AG04450 (cell line): ENCODE measurements at regions of chr4 and their contacts with region 1.

Region 1: GRCh38 chr4:183987987-183988392 is 82.9 kb downstream of the STOX2 start:
- DNase-seq: peak; percentile 66
- H3K4me3 ChIP-seq: peak overlapping the region; percentile 57
- H3K27ac ChIP-seq: peak overlapping the region; percentile 84
- H3K27me3 ChIP-seq: peaks cover 4% of the 10 kb centered on the region
- CTCF ChIP-seq: no peak

Region 2: GRCh38 chr4:183758061-183758757 is 229.8 kb before region 1 on chr4:
- CTCF ChIA-PET with region 1: no interaction called
- POLR2A ChIA-PET with region 1: no interaction called
- DNase-seq: no peak
- H3K4me3 ChIP-seq: no peak overlapping the region
- H3K27ac ChIP-seq: no peak overlapping the region
- H3K27me3 ChIP-seq: no peaks in the 10 kb centered on the region
- CTCF ChIP-seq: peak; percentile 32

Region 3: DNA sequence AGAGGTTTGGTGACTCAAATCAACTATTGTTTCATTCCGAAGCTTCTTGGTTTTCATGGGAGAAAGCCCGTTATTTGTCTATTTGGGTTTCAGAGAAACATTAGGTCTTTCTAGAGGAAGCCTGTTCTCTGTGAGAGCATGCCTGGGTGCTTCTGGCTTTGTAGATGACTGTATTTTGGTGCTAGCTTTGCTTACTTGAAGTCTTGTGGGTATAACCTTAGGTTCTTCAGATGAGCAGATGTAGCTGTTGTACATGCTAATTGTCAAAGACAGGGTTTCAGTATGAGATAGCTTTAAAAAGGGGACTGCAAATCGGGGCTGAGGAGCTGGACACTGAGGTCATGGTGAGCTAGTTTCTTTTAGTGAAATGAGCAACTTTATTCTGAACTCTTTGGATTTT is 90.8 kb before region 1 on chr4:
- CTCF ChIA-PET with region 1: no interaction called
- POLR2A ChIA-PET with region 1: no interaction called
- DNase-seq: no peak
- H3K4me3 ChIP-seq: no peak overlapping the region
- H3K27ac ChIP-seq: no peak overlapping the region
- H3K27me3 ChIP-seq: no peaks in the 10 kb centered on the region
- CTCF ChIP-seq: no peak

Region 4: GRCh38 chr4:184016759-184017668 is 29.0 kb after region 1 on chr4:
- CTCF ChIA-PET with region 1: no interaction called
- POLR2A ChIA-PET with region 1: interaction called, 15 read pairs
- DNase-seq: peak; percentile 57
- H3K4me3 ChIP-seq: peak overlapping the region; percentile 7
- H3K27ac ChIP-seq: peak overlapping the region; percentile 43
- H3K27me3 ChIP-seq: no peaks in the 10 kb centered on the region
- CTCF ChIP-seq: no peak

Region 5: DNA sequence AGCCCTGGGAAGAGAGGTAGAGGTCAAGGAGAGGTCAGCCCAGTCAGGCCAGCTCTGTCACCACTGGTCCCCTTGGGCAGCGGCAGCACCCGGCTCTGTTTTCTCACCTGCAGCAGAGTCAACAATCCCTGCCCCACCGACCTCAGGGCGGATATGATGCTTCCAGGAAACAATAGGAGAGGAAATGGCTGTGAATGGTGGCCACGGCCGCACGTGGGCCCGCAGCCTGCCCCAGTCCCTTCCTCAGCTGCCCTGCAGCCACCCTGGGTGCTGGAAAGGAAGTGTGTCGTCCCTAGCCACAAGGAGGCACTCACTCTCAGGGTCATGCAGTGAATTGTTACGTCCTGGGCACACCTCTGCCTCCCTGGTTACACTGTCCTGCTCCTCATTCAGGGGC is 322.2 kb after region 1 on chr4:
- CTCF ChIA-PET with region 1: no interaction called
- POLR2A ChIA-PET with region 1: no interaction called
- DNase-seq: no peak
- H3K4me3 ChIP-seq: no peak overlapping the region
- H3K27ac ChIP-seq: no peak overlapping the region
- H3K27me3 ChIP-seq: no peaks in the 10 kb centered on the region
- CTCF ChIP-seq: no peak